ENCODE measurements at regions of chr3 and their contacts with region 1.

Region 1: DNA sequence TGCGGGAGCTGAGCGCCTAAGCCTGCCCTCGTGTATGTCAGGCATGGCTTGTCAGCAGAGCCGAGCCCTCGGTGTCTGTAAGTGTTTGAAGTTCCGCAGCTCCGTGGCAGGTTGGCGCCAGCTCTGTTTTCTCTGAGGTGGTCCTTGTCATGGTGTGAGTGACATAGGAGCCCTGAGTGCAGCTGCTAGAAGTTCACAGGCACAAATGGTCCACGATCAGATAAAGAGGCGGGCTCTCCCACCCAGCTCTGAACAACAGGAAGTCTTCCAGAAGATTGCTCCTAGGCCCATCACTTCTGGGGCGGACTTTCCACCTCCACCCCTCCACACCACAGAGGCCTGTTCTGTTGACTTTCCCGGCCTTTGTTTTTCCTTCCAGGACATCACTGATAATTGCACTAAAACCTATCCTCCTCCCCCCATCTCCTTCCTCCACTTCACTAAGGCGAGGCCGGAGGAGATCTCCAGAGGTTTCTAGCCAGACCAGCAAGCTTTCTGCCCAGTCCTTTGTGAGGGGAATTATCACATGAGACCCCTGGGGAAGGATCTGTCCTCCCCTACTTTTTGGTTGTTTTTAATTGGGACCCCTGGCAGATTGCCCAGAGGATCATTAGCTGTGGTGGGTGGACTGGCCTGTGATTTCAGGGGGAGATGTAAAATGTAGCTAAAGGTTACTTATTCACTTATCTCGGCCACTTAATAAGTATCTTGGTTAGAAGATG is 19.9 kb downstream of the ITPR1 start:
- DNase-seq: no peak
- H3K4me3 Mint-ChIP-seq: no peak overlapping the region
- H3K27ac Mint-ChIP-seq: no peak overlapping the region
- H3K4me1 Mint-ChIP-seq: peaks cover 23% of the 10 kb centered on the region
- H3K27me3 Mint-ChIP-seq: no peaks in the 10 kb centered on the region

Region 2: GRCh38 chr3:4466741-4467521 is 46.1 kb before region 1 on chr3 and contains the start of gene SUMF1:
- CTCF ChIA-PET with region 1: no interaction called
- intact Hi-C with region 1: loop called (anchors 2 kb)
- DNase-seq: peak; percentile 80
- H3K4me3 Mint-ChIP-seq: peak within 1 kb of the TSS; percentile 82
- H3K27ac Mint-ChIP-seq: peak within 1 kb of the TSS; percentile 78
- H3K4me1 Mint-ChIP-seq: peaks cover 18% of the 10 kb centered on the region
- H3K27me3 Mint-ChIP-seq: no peaks in the 10 kb centered on the region
- total RNA-seq, gene SUMF1: 3.9 to 5.0 TPM

Region 3: DNA sequence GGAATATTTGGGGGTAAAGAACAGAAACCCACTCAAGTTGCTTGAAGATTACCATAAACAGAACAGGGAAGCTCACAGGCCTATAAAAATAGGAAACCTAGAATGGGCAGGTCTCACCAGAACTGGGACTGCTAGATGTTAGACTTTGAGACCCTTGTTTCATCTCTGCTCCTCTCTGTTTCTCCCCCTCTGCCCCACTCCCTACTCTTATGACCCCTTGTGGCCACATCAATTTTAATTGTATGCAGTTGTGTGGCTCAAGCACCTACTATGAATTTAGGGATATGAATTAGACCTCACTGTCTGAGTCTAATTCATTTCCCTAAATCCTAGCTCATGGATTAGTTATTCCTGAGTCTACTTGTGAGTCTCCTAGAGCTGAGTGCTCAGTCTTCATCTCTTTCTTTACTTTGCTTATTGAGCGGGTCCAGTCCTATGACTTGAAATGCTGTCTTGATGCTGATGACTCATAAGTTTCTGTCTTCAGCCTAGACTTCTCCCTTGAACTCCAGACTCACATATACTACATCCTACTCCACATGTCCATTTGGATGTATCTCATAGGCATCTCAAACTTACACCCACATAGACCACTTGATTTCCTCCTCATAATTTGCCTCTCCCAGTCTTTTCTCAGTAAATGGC is 58.8 kb after region 1 on chr3:
- CTCF ChIA-PET with region 1: interaction called, 3 read pairs
- intact Hi-C with region 1: loop called (anchors 2 kb)
- DNase-seq: no peak
- H3K4me3 Mint-ChIP-seq: no peak overlapping the region
- H3K27ac Mint-ChIP-seq: no peak overlapping the region
- H3K4me1 Mint-ChIP-seq: peaks cover 8% of the 10 kb centered on the region
- H3K27me3 Mint-ChIP-seq: no peaks in the 10 kb centered on the region

Measured in activated naive CD4-positive, alpha-beta T cell treated with anti-CD3 and anti-CD28 coated beads for 36 hours (primary cell).